ENCODE measurements at regions of chr1 and their contacts with region 1.

Region 1: DNA sequence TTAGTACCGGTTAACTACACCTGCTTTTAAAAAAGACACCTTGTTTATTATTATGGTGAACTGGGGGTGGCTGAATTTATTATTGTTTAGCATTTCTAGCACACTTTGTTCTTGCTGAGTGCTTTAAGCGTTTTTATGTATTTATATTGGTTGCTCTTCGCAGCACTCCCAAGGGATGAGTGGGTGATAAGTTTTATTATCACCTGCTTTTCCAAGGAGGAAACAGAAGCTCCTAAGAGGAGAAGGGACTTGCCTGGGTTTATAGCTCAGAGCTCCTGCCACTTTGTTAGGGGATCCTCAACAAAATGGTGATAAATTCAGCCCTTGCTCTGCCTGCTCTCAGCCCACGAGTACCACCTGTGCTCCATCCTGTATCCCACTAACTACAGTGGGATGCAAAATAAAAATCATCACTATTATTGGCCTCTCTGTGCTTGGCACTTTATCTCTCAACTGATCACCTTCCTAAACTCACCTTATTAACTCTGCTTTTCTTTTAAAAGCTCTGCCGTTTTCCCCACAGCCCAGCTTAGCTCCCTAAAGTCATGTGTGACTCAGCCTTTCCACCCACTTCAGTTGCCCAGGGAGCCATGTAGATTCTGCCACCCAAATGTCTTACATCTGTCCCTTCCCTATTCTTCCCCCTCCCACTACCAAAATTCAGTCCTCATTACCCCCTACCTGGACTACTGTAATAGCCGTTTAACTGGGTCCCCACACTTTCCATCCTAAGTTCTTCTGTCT is 44.5 kb downstream of the BCL9 start:
- DNase-seq: no peak
- ATAC-seq: no peak
- H3K4me3 ChIP-seq: no peak overlapping the region
- H3K27ac ChIP-seq: no peak overlapping the region
- H3K4me1 ChIP-seq: peaks cover 0 to 22% (median 4%) of the 10 kb centered on the region in 9 donors
- H3K27me3 ChIP-seq: peaks cover 0 to 67% (median 0%) of the 10 kb centered on the region in 7 donors
- CTCF ChIP-seq: no peak

Region 2: DNA sequence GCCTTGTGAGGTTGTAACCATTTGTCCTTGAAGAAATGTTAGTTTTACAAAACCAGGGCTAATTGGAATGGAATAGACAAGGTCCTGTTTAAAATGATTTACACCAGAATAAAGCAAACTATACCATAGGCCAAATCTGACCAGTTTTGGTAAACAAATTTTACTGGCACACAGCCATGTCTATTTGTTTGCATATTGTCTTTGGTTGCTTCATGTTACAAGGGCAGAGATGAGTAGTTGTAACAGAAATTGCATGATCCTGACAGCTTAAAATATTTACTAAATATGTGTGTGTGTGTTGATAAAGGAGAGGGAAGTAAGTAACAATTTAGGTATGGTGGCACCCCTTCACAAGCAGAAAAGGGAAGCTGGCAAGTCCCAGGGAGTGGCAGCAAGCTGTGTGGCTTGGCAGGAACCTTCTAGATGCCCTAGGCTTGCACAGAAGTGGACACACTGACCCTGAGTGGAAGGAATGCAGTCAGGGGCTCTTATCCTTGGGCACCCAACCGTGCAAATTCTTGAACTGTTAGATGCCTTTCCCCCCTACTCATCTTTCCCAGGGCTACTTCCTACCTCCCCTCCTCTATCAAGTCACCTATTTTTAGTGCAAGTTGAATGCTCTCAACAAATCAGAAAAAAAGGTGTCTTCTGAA is 65.5 kb after region 1 on chr1:
- intact Hi-C with region 1: loop called in 1 of 10 experiments (anchors 2 kb)
- DNase-seq: no peak
- ATAC-seq: no peak
- H3K4me3 ChIP-seq: no peak overlapping the region
- H3K27ac ChIP-seq: no peak overlapping the region
- H3K4me1 ChIP-seq: peaks cover 0 to 7% (median 0%) of the 10 kb centered on the region in 9 donors
- H3K27me3 ChIP-seq: no peaks in the 10 kb centered on the region
- CTCF ChIP-seq: no peak

Measured in heart right ventricle (tissue), 16 donors.